SK-N-SH (cell line): ENCODE measurements at regions of chr16 and their contacts with region 1.

Region 1: DNA sequence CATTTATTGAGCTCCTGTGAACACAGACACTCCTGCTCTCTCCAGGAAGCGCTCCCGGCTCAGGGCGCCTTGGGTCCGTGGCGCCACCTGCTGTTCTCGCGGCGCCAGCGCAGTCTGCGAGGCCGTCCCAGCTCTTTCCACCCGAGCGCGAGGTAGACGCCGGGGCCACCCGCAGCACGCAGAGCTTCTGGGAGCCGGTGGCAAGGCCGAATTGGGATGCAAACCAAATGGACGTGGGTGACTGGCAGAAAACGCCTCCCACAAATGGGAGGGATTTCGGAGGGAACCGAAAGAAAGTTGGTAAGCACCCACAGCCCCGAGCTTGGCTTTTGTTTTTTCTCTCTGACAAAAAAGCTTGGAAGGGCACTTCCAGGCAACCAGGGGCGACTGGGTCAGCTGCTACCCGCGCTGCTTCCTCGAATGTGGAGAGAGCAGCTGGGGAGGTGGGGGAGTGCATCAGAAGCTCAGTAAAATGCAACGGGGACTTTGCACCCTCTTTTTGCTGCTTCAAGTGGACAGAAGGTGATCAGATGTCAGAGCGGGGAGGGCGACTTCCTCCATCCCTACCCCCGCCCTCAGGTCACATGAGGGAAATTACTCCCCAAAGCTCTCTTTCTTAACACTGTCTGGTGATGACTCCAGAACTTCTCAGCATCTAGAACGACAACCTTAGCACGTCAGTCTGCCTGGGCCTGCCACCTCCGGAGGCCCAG is 13.5 kb upstream of the N4BP1 start:
- DNase-seq: peak; percentile 93
- H3K4me3 ChIP-seq: peak overlapping the region; percentile 38 to 57
- H3K27ac ChIP-seq: no peak overlapping the region; a peak in 1 of 4 replicates
- H3K4me1 ChIP-seq: peaks cover 0 to 7% of the 10 kb centered on the region in 2 experiments; a peak in 1 of 4 replicates
- H3K27me3 ChIP-seq: no peaks in the 10 kb centered on the region
- CTCF ChIP-seq: peak; percentile 96
- EP300 ChIP-seq: no peak
- RAD21 ChIP-seq: peak; percentile 88

Region 2: GRCh38 chr16:48231727-48232492 is 391.6 kb before region 1 on chr16:
- CTCF ChIA-PET with region 1: interaction called, 24 read pairs
- POLR2A ChIA-PET with region 1: no interaction called
- DNase-seq: peak; percentile 45
- H3K4me3 ChIP-seq: no peak overlapping the region
- H3K27ac ChIP-seq: no peak overlapping the region
- H3K4me1 ChIP-seq: no peaks in the 10 kb centered on the region
- H3K27me3 ChIP-seq: no peaks in the 10 kb centered on the region
- CTCF ChIP-seq: peak; percentile 44
- EP300 ChIP-seq: no peak
- RAD21 ChIP-seq: peak; percentile 52

Region 3: DNA sequence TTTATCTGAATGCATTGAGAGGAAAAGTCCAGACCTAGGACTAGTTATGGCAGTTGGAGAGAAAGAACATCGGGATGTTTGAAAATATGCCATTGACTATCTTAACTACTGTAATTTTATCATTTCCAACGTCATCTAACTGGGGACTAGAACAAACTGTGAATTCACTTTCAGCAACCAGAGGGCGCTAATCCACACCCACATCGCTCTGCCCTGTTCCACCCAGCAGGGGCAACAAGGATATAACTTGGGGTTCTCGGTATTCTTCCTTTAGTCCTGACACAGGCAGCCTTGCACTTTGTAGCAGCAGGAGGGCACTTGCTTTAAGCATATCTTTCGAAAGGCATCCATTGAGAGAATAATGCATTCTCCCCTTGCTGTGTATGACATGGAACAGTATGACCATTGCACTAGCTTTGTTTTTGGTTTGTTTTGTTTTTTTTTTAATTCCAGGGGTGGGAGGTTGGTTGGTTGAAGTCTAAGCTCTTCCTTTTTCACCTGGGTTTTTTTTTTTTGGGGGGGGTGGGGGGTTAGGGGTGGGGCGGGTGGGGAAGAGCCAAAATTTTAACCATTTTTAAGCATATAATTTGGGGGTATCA is 269.8 kb before region 1 on chr16:
- CTCF ChIA-PET with region 1: interaction called, 29 read pairs
- POLR2A ChIA-PET with region 1: no interaction called
- DNase-seq: peak; percentile 76
- H3K4me3 ChIP-seq: peak overlapping the region in 1 of 2 experiments; percentile 39; a peak in 1 of 4 replicates
- H3K27ac ChIP-seq: peak overlapping the region in 1 of 2 experiments; percentile 19; a peak in 1 of 4 replicates
- H3K4me1 ChIP-seq: no peaks in the 10 kb centered on the region
- H3K27me3 ChIP-seq: no peaks in the 10 kb centered on the region
- CTCF ChIP-seq: peak; percentile 92
- EP300 ChIP-seq: no peak
- RAD21 ChIP-seq: peak; percentile 81

Region 4: GRCh38 chr16:48385272-48386150 is 237.9 kb before region 1 on chr16 and contains the start of gene SIAH1:
- CTCF ChIA-PET with region 1: interaction called, 14 read pairs
- POLR2A ChIA-PET with region 1: interaction called, 4 read pairs
- DNase-seq: peak; percentile 98
- H3K4me3 ChIP-seq: peak within 1 kb of the TSS; percentile 81 to 85
- H3K27ac ChIP-seq: peak within 1 kb of the TSS; percentile 77 to 96
- H3K4me1 ChIP-seq: peaks cover 9 to 20% of the 10 kb centered on the region in 2 experiments; a peak in 3 of 4 replicates
- H3K27me3 ChIP-seq: no peaks in the 10 kb centered on the region
- CTCF ChIP-seq: no peak
- EP300 ChIP-seq: no peak
- RAD21 ChIP-seq: no peak
- polyA plus RNA-seq, gene SIAH1: 15.1 and 15.4 TPM in 2 replicates

Region 5: GRCh38 chr16:48531011-48531962 is 92.2 kb before region 1 on chr16:
- CTCF ChIA-PET with region 1: interaction called, 12 read pairs
- POLR2A ChIA-PET with region 1: no interaction called
- DNase-seq: peak; percentile 87
- H3K4me3 ChIP-seq: no peak overlapping the region
- H3K27ac ChIP-seq: peak overlapping the region in 1 of 2 experiments; percentile 51; a peak in 2 of 4 replicates
- H3K4me1 ChIP-seq: peaks cover 0 to 13% of the 10 kb centered on the region in 2 experiments; a peak in 1 of 4 replicates
- H3K27me3 ChIP-seq: no peaks in the 10 kb centered on the region
- CTCF ChIP-seq: no peak
- EP300 ChIP-seq: no peak
- RAD21 ChIP-seq: no peak; the same call in 1 of the 2 replicates

Region 6: DNA sequence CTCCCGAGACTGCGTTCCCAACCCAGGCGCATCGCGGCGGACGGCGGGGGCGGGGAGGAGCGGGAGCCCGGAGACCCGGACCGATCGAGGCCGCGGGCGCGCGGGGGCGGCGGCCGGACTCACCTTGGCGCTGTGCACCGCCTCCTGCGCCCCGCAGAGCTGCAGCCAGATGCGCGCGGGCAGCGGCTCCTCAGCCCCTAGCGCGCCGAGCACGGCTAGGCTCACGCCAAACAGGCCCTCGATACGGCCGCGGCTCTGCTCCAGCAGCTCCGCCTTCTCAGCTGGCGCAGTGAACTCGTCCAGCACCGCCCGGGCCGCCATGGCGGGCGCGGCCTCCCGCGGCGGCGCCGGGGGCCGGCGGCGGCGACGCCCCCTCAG is 13.8 kb before region 1 on chr16:
- CTCF ChIA-PET with region 1: interaction called, 53 read pairs
- POLR2A ChIA-PET with region 1: interaction called, 4 read pairs
- DNase-seq: no peak
- H3K4me3 ChIP-seq: peak overlapping the region; percentile 65 to 75
- H3K27ac ChIP-seq: peak overlapping the region; percentile 98 to 99
- H3K4me1 ChIP-seq: peaks cover 14 to 22% of the 10 kb centered on the region in 2 experiments; a peak in 3 of 4 replicates
- H3K27me3 ChIP-seq: no peaks in the 10 kb centered on the region
- CTCF ChIP-seq: no peak
- EP300 ChIP-seq: no peak
- RAD21 ChIP-seq: no peak

Region 7: DNA sequence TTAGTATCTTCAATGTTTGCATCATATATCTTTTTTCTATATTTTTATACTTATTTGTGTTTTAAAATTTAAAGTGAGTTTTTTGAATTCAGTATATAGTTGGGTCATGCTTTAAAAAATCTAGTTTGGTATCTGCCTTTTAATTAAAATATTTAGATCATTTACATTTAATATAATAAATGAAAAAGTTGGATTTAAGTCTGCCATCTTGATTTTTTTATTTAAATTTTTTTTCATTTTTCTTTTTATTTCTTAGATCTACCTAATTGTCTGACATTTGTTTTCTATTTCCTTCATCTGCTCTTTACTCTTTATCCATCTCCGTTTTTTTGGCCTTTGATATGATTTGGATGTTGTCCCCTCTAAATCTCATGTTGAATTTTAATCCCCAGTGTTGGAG is 36.5 kb after region 1 on chr16:
- CTCF ChIA-PET with region 1: no interaction called
- POLR2A ChIA-PET with region 1: no interaction called
- DNase-seq: no peak
- H3K4me3 ChIP-seq: no peak overlapping the region
- H3K27ac ChIP-seq: no peak overlapping the region
- H3K4me1 ChIP-seq: no peaks in the 10 kb centered on the region
- H3K27me3 ChIP-seq: no peaks in the 10 kb centered on the region
- CTCF ChIP-seq: no peak
- EP300 ChIP-seq: no peak
- RAD21 ChIP-seq: no peak